AG04450 (cell line): ENCODE measurements at regions of chr7 and their contacts with region 1.

Region 1: DNA sequence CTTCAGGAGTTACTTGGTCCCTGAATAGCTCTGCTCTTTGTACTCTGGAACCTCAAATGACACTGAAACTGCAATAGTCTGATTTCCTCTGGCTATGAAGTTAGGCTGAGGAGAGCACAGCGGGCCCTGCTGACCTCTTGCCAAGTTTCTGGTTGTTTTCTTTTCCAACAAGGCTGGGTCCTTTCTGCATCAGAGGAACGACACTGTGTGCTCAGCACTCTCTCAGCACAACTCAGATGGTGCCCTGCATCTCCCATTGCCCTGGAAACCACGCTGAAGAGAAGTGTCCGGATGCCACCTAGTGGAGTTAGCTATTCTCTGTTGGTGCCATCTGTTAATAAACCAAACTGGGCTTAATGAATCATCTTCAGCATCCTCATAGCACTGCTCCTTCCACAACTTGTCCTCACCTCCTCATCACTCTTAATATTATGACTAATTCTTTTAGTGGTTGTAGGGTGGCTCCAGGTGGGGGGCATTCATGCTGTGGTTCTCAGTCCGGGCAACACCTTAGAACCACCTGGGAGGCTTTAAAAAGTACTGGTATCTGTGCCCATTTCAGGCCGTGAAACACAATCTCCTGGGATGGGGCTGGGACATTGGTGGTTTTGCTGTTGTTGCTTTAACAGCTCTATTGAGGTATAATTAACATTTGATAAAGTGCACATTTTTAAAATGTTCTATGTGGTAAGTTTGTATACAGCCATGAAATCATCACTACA is 8.2 kb upstream of the EFCAB10 start:
- DNase-seq: peak; percentile 24
- H3K4me3 ChIP-seq: no peak overlapping the region
- H3K27ac ChIP-seq: no peak overlapping the region
- H3K27me3 ChIP-seq: no peaks in the 10 kb centered on the region
- CTCF ChIP-seq: peak; percentile 74

Region 2: DNA sequence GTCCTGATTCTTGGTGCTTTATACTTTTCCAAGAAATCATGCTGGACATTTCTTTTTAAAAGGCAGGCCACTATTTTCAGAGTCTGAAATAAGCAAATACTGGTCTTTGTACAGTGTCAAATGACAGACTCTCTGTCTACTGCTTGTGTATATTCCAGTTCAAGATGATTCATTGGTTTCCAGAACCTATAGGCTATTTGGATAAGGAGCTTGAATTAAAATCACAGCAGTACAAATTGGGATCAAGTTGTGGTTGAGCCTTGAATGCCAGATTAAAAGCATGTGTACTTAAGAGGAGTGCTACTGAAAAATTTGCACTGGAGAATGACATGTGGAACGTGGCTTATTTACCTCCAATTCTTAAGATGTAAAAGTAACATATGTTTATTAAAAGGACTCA is 564.8 kb before region 1 on chr7:
- CTCF ChIA-PET with region 1: interaction called, 10 read pairs
- POLR2A ChIA-PET with region 1: no interaction called
- DNase-seq: peak; percentile 61
- H3K4me3 ChIP-seq: no peak overlapping the region
- H3K27ac ChIP-seq: no peak overlapping the region
- H3K27me3 ChIP-seq: no peaks in the 10 kb centered on the region
- CTCF ChIP-seq: no peak

Region 3: GRCh38 chr7:105399043-105399725 is 190.3 kb before region 1 on chr7:
- CTCF ChIA-PET with region 1: interaction called, 13 read pairs
- POLR2A ChIA-PET with region 1: no interaction called
- DNase-seq: no peak
- H3K4me3 ChIP-seq: no peak overlapping the region
- H3K27ac ChIP-seq: no peak overlapping the region
- H3K27me3 ChIP-seq: no peaks in the 10 kb centered on the region
- CTCF ChIP-seq: peak; percentile 59

Region 4: GRCh38 chr7:105602325-105603305 is 13.1 kb after region 1 on chr7:
- CTCF ChIA-PET with region 1: interaction called, 5 read pairs
- POLR2A ChIA-PET with region 1: interaction called, 12 read pairs
- DNase-seq: no peak
- H3K4me3 ChIP-seq: no peak overlapping the region
- H3K27ac ChIP-seq: no peak overlapping the region
- H3K27me3 ChIP-seq: peaks cover 4% of the 10 kb centered on the region
- CTCF ChIP-seq: no peak